ENCODE measurements at regions of chr19 and their contacts with region 1.

Region 1: GRCh38 chr19:13880059-13881043 is 3.4 kb downstream of the NANOS3 start:
- DNase-seq: peak; percentile 99
- ATAC-seq: peak; percentile 96
- H3K4me3 Mint-ChIP-seq: peak overlapping the region; percentile 54
- H3K27ac Mint-ChIP-seq: peak overlapping the region; percentile 64
- H3K4me1 Mint-ChIP-seq: peaks cover 45% of the 10 kb centered on the region
- H3K27me3 Mint-ChIP-seq: peaks cover 8% of the 10 kb centered on the region

Region 2: GRCh38 chr19:13804830-13805683 is 75.3 kb before region 1 on chr19:
- CTCF ChIA-PET with region 1: no interaction called
- POLR2A ChIA-PET with region 1: no interaction called
- DNase-seq: no peak
- ATAC-seq: no peak
- H3K4me3 Mint-ChIP-seq: no peak overlapping the region
- H3K27ac Mint-ChIP-seq: no peak overlapping the region
- H3K4me1 Mint-ChIP-seq: peaks cover 7% of the 10 kb centered on the region
- H3K27me3 Mint-ChIP-seq: no peaks in the 10 kb centered on the region

Region 3: GRCh38 chr19:13905938-13906904 is 25.9 kb after region 1 on chr19 and contains the starts of genes BRME1 and CC2D1A:
- CTCF ChIA-PET with region 1: interaction called, 16 read pairs
- POLR2A ChIA-PET with region 1: no interaction called
- DNase-seq: peak; percentile 97
- ATAC-seq: peak; percentile 99
- H3K4me3 Mint-ChIP-seq: peak within 1 kb of the TSS; percentile 83
- H3K27ac Mint-ChIP-seq: peak within 1 kb of the TSS; percentile 89
- H3K4me1 Mint-ChIP-seq: peaks cover 36% of the 10 kb centered on the region
- H3K27me3 Mint-ChIP-seq: no peaks in the 10 kb centered on the region
- total RNA-seq, gene BRME1: 4.2 to 5.0 TPM
- total RNA-seq, gene CC2D1A: 27.8 to 28.9 TPM

Region 4: DNA sequence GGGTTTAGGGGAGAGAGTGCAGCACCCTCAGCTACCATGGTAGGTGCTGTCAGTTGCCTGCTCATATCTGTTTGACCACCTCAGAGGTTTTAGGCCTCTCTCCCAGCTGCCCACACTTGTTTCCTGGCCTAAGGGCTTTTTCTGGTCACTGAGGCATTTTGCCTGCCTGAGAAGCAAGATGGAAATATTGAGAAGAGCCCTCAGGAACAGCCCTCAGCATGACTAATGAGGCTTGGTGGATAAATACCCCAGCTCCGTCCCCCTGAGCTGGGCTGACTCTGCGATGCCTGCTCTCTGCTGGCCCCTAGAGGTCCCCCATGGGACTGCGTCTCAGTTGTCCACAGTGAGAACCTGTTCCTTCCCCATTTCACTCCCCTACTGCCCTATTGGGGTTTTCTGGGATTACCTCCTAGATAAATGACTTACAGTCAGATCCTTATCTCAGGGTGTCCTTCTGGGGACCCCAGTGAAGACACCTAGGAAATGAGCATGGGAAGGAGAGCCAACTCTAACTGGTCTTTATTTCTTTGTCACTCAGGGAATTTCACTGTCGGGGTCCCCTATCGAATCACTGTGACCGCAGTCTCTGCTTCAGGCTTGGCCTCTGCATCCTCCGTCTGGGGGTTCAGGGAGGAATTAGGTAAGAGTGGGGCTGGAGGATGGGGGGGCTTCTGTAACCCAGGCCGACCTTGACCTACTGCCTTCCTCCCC is 168.2 kb after region 1 on chr19:
- CTCF ChIA-PET with region 1: interaction called, 15 read pairs
- POLR2A ChIA-PET with region 1: no interaction called
- DNase-seq: peak; percentile 78
- ATAC-seq: peak; percentile 71
- H3K4me3 Mint-ChIP-seq: no peak overlapping the region
- H3K27ac Mint-ChIP-seq: no peak overlapping the region
- H3K4me1 Mint-ChIP-seq: peaks cover 7% of the 10 kb centered on the region
- H3K27me3 Mint-ChIP-seq: no peaks in the 10 kb centered on the region

Region 5: DNA sequence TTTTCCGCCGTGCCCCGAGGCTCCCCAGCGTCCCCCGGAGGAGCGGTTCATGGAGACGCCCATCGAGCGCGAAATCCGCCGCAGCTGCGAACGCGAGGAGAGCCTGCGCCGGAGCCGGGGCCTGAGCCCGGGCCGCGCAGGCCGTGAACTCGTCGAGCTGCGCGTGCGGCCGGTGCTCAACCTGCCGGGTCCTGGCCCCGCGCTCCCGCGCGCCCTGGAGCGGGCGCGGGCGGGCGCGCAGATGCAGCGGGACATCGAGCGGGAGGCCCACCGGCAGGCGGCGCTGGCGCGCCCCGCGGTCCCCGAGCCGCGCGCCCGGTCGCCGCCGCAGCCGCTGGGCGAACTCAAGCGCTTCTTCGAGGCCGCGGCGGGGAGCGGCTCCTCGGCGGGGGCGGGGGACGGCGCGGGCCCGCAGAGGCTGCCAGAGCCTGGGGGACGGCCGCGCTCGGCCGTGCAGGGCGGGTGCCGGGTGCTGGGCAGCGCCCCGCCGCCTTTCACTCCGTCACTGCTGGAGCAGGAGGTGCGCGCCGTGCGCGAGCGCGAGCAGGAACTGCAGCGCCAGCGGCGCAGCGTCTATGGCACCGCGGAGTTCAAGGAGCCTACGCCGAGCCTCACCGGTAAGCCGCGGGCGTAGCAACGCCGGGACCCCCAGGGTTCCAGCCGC is 193.0 kb after region 1 on chr19:
- CTCF ChIA-PET with region 1: interaction called, 67 read pairs
- POLR2A ChIA-PET with region 1: no interaction called
- DNase-seq: peak; percentile 80
- ATAC-seq: peak; percentile 78
- H3K4me3 Mint-ChIP-seq: peak overlapping the region; percentile 88
- H3K27ac Mint-ChIP-seq: peak overlapping the region; percentile 80
- H3K4me1 Mint-ChIP-seq: peaks cover 30% of the 10 kb centered on the region
- H3K27me3 Mint-ChIP-seq: peaks cover 2% of the 10 kb centered on the region